BJ (cell line): ENCODE measurements at regions of chr11 and their contacts with region 1.

Region 1: DNA sequence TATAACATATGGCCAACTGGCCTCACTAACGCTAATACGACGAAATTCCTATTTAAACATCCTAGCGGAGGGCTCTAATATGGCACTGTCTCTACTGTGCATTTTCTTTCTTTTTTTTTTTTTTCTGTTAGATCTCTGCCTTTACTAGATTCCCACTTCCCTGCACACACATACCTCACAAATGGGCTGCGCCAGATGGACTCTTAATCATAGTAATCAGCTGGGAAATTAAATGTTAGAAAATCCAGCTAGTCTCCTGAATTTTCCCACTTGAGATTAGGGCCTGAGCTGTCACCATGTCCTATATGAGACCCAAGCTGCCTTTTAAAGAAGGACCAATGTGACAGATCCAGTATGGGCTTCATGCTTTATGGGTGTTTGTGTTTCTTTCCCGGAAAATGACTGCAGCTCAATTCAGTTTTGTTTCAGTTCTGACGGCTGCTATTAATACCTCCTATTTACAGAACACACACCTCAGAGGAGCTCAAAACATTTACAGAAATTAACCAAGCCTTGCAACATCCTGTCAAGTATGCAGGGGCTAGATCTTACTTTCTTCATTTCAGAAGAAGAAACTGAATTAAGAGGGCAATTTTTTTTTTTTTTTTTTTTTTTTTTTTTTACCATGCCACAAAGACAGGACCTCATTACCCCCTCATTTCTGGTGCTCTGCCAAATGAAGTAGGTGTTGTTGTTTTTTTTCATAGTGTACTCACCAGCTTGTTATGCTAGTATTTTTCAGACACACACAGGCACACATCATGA is 49.8 kb upstream of the BLID start:
- DNase-seq: no peak
- H3K4me3 ChIP-seq: no peak overlapping the region
- H3K27me3 ChIP-seq: no peaks in the 10 kb centered on the region
- CTCF ChIP-seq: no peak

Region 2: GRCh38 chr11:120344302-120345004 is 1821.3 kb before region 1 on chr11:
- CTCF ChIA-PET with region 1: no interaction called
- POLR2A ChIA-PET with region 1: interaction called, 16 read pairs
- DNase-seq: no peak
- H3K4me3 ChIP-seq: no peak overlapping the region
- H3K27me3 ChIP-seq: no peaks in the 10 kb centered on the region
- CTCF ChIP-seq: no peak

Region 3: DNA sequence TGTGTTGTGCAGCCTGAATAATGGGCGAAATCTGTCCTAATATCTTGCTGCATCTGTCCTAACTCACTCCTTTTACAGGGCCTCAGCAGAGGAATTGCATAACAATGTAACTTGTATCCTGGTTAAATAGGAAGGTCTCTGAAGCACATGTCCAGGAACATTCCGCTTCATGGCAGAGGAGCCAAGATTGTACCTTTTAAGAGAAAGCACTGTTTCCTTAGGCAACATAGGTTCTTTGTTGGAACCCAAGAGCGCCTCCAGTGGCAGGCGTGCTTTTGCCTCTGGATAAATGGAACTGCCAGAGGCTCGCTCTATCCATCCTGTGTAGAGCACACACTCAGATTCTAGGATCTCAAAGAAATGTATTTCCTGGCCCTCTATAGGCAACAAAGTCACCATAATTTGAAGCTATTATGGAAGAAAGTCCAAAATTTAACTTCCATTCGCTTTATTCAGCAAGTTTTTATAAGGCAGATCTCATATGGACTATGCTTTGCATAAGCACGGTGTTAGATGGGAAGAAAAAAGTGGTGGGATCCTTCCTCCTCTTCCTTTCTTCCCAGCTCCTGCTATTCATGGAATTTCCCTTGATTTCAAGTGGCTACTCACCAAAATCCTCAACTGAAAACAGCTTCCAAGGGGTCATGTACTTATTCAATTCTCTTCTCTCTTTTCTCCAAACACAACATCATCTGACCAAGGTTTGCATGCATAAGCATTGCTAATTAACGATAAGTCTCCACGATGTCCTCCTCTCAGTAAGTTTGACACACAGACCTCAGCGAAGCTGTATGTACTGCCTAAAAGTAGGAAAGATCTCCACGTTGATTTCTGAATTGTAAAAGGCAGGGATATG is 50.0 kb before region 1 on chr11 and contains the start of gene BLID:
- CTCF ChIA-PET with region 1: interaction called, 3 read pairs
- POLR2A ChIA-PET with region 1: interaction called, 12 read pairs
- DNase-seq: no peak
- H3K4me3 ChIP-seq: no peak within 1 kb of the TSS
- H3K27me3 ChIP-seq: no peaks in the 10 kb centered on the region
- CTCF ChIP-seq: peak; percentile 64
- polyA plus RNA-seq, gene BLID: 0.16 and 0.37 TPM in 2 replicates

Region 4: GRCh38 chr11:122189229-122189628 is 23.4 kb after region 1 on chr11:
- CTCF ChIA-PET with region 1: no interaction called
- POLR2A ChIA-PET with region 1: interaction called, 10 read pairs
- DNase-seq: peak; percentile 95
- H3K4me3 ChIP-seq: no peak overlapping the region
- H3K27me3 ChIP-seq: no peaks in the 10 kb centered on the region
- CTCF ChIP-seq: no peak

Region 5: GRCh38 chr11:122242731-122243130 is 76.9 kb after region 1 on chr11:
- CTCF ChIA-PET with region 1: no interaction called
- POLR2A ChIA-PET with region 1: no interaction called
- DNase-seq: no peak
- H3K4me3 ChIP-seq: no peak overlapping the region
- H3K27me3 ChIP-seq: no peaks in the 10 kb centered on the region
- CTCF ChIP-seq: no peak